CD4-positive, alpha-beta memory T cell (primary cell): ENCODE measurements at regions of chr11 and their contacts with region 1.

Region 1: DNA sequence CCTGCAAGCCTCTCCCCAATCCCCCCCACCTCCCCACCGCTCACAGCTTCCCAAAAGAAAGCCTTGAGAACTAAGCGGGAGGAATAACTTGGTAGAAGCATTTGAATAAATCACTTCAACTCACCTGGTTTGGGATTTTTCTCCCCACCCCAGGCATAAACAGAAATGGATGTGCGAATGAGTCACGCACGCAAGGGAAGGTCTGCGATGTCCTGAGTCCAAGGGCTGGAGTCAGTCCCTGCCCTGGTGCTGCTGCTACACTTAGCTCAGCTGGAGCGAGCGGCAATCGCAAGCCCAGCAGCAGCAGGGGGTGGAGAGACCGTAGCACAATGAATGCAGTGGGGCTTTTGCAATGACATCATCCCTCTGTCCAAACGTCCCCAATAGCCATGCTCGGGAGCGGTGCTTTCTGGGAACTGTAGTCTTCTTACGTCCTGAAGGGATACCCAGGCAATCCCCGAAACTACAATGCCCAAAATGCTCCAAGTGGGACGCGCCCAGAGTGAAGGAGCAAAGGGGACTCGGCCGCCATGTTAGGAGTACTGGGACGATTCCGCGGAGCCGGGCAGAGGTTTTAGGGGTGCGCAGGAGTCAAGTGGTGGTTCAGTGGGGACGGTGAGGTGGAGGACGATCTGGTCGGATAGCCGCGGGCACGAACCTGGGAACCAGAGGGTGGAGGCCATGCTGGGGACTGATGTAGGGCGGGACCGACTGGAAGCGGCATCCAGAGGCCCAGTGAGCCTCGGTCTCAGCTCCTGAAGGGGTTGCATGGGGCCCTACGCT is at the start of gene RAB30:
- DNase-seq: peak; percentile 94 to 99 (median 96)
- H3K4me3 ChIP-seq: peak within 1 kb of the TSS; percentile 89 to 91
- H3K4me3 Mint-ChIP-seq: no peak within 1 kb of the TSS
- H3K27ac ChIP-seq: peak within 1 kb of the TSS; percentile 97
- H3K27ac Mint-ChIP-seq: no peak within 1 kb of the TSS
- H3K4me1 ChIP-seq: peaks cover 60% of the 10 kb centered on the region
- H3K4me1 Mint-ChIP-seq: peaks cover 6 to 39% (median 24%) of the 10 kb centered on the region in 4 donors
- H3K27me3 ChIP-seq: no peaks in the 10 kb centered on the region
- H3K27me3 Mint-ChIP-seq: no peaks in the 10 kb centered on the region
- total RNA-seq, gene RAB30: 12.3 to 14.1 TPM

Region 2: GRCh38 chr11:82906244-82906654 is 165.5 kb before region 1 on chr11:
- CTCF ChIA-PET with region 1: no interaction called
- POLR2A ChIA-PET with region 1: interaction called, 24 read pairs
- intact Hi-C with region 1: loop called (anchors 1 kb)
- DNase-seq: peak in 4 of 5 donors; percentile 45 to 51 (median 48)
- H3K4me3 ChIP-seq: no peak overlapping the region
- H3K4me3 Mint-ChIP-seq: no peak overlapping the region
- H3K27ac ChIP-seq: no peak overlapping the region
- H3K27ac Mint-ChIP-seq: no peak overlapping the region
- H3K4me1 ChIP-seq: peaks cover 18% of the 10 kb centered on the region
- H3K4me1 Mint-ChIP-seq: peaks cover 11 to 22% (median 16%) of the 10 kb centered on the region in 4 donors
- H3K27me3 ChIP-seq: no peaks in the 10 kb centered on the region
- H3K27me3 Mint-ChIP-seq: no peaks in the 10 kb centered on the region

Region 3: GRCh38 chr11:82959987-82960778 is 111.6 kb before region 1 on chr11:
- CTCF ChIA-PET with region 1: interaction called, 6 read pairs
- POLR2A ChIA-PET with region 1: interaction called, 31 read pairs
- intact Hi-C with region 1: loop called (anchors 1 kb)
- DNase-seq: peak; percentile 77 to 85 (median 82)
- H3K4me3 ChIP-seq: peak overlapping the region; percentile 13 to 39
- H3K4me3 Mint-ChIP-seq: peak overlapping the region; percentile 60 to 89 (median 80)
- H3K27ac ChIP-seq: peak overlapping the region; percentile 55
- H3K27ac Mint-ChIP-seq: peak overlapping the region; percentile 86 to 96 (median 95)
- H3K4me1 ChIP-seq: peaks cover 75% of the 10 kb centered on the region
- H3K4me1 Mint-ChIP-seq: peaks cover 57 to 88% (median 74%) of the 10 kb centered on the region in 4 donors
- H3K27me3 ChIP-seq: no peaks in the 10 kb centered on the region
- H3K27me3 Mint-ChIP-seq: no peaks in the 10 kb centered on the region

Region 4: GRCh38 chr11:83115551-83115950 is 43.8 kb after region 1 on chr11:
- CTCF ChIA-PET with region 1: no interaction called
- POLR2A ChIA-PET with region 1: interaction called, 4 read pairs
- intact Hi-C with region 1: loop called (anchors 5 kb)
- DNase-seq: no peak
- H3K4me3 ChIP-seq: no peak overlapping the region
- H3K4me3 Mint-ChIP-seq: peak overlapping the region; percentile 25 to 81 (median 64)
- H3K27ac ChIP-seq: no peak overlapping the region
- H3K27ac Mint-ChIP-seq: peak overlapping the region in 4 of 7 donors; percentile 54 to 84 (median 75)
- H3K4me1 ChIP-seq: peaks cover 44% of the 10 kb centered on the region
- H3K4me1 Mint-ChIP-seq: peaks cover 33 to 54% (median 34%) of the 10 kb centered on the region in 4 donors
- H3K27me3 ChIP-seq: no peaks in the 10 kb centered on the region
- H3K27me3 Mint-ChIP-seq: peaks cover 0 to 1% of the 10 kb centered on the region in 2 donors

Region 5: DNA sequence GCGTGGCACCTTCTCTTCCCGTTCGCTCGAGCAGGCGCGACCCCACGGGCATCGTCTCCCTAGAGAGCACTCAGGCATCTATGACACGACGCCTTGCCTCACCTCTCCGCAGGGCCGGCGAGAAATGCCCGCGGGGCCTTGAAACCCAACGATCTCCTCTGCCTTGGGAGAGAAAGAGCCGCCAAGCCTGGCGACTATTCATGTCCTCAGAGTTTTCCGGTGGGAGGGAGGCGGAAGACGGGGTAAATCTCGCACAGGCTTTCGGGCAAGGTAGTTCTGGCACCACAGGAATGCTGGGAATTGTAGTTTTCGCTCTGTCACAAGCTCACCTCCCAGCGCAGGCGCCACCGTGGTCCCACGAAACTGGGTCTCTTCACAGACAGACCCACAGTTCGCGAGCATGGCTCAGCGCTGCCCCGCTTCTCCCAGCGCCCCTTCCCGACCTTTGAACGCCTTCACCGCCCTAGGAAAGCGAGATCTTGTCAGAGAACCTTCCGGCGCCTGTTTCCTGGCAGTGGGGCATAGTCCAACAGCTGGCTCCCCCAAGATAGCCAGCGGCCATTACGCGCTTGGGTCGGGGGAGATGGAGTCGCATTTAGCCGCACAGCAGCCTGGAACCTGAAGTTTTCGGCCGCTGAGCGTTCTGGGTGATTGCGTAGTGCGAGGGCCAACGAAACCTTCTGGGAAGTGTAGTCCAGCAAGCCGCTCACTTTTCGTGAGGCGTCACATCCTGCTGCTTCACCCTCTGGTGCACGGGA is 214.2 kb after region 1 on chr11 and contains the start of gene CCDC90B:
- CTCF ChIA-PET with region 1: no interaction called
- POLR2A ChIA-PET with region 1: interaction called, 8 read pairs
- intact Hi-C with region 1: loop called (anchors 1 kb)
- DNase-seq: peak; percentile 95 to 97 (median 97)
- H3K4me3 ChIP-seq: peak within 1 kb of the TSS; percentile 89 to 92
- H3K4me3 Mint-ChIP-seq: peak within 1 kb of the TSS; percentile 94 to 99 (median 98)
- H3K27ac ChIP-seq: peak within 1 kb of the TSS; percentile 95
- H3K27ac Mint-ChIP-seq: peak within 1 kb of the TSS; percentile 98 to 100 (median 100)
- H3K4me1 ChIP-seq: peaks cover 42% of the 10 kb centered on the region
- H3K4me1 Mint-ChIP-seq: peaks cover 26 to 46% (median 34%) of the 10 kb centered on the region in 4 donors
- H3K27me3 ChIP-seq: no peaks in the 10 kb centered on the region
- H3K27me3 Mint-ChIP-seq: no peaks in the 10 kb centered on the region
- total RNA-seq, gene CCDC90B: 37.6 to 38.0 TPM

Region 6: DNA sequence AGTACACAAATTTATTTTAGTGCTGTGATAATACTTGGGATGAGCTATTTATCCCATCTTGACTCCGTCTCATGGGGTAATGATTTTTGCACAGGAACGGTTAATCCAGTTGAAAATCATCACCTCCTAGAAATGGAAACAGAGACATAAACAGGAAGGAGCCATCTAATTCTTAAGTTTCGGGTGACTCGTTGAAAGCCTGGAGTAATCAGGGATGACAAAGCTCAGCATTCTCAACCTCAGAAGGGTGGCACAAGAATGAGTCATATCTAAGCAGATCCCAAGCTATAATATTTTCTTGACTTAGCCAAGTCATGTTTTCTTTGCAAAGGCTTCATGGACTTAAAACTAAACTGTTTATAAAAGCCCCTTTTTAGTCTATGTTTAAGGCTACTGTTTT is 495.2 kb after region 1 on chr11:
- CTCF ChIA-PET with region 1: no interaction called
- POLR2A ChIA-PET with region 1: no interaction called
- intact Hi-C with region 1: no loop called
- DNase-seq: no peak
- H3K4me3 ChIP-seq: no peak overlapping the region
- H3K4me3 Mint-ChIP-seq: no peak overlapping the region
- H3K27ac ChIP-seq: no peak overlapping the region
- H3K27ac Mint-ChIP-seq: no peak overlapping the region
- H3K4me1 ChIP-seq: no peaks in the 10 kb centered on the region
- H3K4me1 Mint-ChIP-seq: no peaks in the 10 kb centered on the region
- H3K27me3 ChIP-seq: no peaks in the 10 kb centered on the region
- H3K27me3 Mint-ChIP-seq: peaks cover 2 to 10% of the 10 kb centered on the region in 2 donors